CD4-positive, alpha-beta T cell (primary cell): ENCODE measurements at regions of chr2 and their contacts with region 1.

Region 1: DNA sequence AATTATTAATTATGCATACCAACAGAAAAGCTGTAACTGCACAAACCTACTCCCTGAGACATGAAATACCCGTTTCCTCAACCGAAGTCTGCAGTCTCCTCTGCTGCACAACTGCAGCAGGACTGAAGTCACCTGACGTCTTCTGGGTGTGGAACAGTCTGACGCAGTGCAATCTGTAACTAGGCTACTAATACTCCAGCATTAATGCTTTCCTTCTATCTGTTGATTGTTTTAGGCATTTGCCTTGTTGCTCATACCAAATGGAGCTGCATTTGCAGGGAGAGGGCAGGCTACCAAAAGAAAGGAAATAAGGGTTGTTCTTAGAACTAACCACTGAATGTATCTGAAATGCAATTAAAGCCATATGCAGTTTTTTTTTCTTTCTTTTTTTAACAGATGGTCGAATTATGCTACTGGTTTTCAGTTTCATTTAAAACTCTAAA is 40.1 kb downstream of the RTN4 start:
- DNase-seq: peak; percentile 22 to 81 (median 38)
- ATAC-seq: peak; percentile 94
- H3K4me3 ChIP-seq: peak overlapping the region; percentile 54
- H3K4me3 Mint-ChIP-seq: peak overlapping the region; percentile 92
- H3K27ac ChIP-seq: peak overlapping the region; percentile 25 to 36
- H3K27ac Mint-ChIP-seq: peak overlapping the region; percentile 87
- H3K4me1 ChIP-seq: peaks cover 9% of the 10 kb centered on the region
- H3K4me1 Mint-ChIP-seq: peaks cover 76% of the 10 kb centered on the region
- H3K27me3 ChIP-seq: no peaks in the 10 kb centered on the region
- H3K27me3 Mint-ChIP-seq: no peaks in the 10 kb centered on the region
- CTCF ChIP-seq: no peak

Region 2: DNA sequence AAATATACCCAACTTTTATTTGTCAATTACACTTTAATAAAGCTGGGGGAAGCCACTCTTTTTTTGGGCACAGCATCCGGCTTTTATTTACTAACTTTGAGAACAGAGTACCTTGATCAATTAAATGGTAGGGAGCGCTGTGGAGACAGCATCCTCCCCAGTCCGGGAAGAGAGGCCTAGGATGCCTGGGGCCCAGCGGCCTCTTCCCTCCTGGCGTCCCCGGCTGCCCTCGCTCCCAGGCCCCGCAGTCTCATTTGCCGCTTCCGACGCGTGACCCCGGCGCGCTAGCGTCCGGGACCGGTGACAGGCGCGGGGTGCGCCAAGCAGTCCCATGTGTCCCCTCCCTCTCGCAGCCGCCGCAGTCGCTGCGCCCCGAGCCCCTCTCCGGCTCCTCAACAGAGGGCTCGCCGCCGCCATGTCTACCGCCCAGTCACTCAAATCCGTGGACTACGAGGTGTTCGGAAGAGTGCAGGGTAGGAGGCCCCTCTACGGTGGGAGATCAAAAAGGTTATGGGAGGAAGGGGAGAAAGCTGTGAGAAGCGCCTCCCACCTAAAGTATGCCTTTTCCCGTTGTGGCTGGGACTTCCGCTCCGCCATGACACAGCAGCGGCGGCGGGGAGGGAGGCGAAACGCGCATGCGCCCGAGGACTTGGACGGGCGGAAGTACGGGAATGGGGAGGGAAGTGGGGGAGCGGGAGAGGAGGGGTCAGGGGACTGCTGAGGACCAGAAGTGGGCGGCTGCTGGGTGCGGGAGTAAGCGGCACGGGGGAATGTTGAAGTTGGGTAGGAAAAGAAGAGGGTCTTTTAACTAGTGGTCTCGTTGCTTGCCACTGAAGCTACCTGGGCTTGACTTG is 894.7 kb before region 1 on chr2 and contains the start of gene ACYP2:
- CTCF ChIA-PET with region 1: no interaction called
- POLR2A ChIA-PET with region 1: no interaction called
- intact Hi-C with region 1: loop called in 1 of 2 experiments (anchors 10 kb)
- DNase-seq: peak; percentile 79 to 96 (median 90)
- ATAC-seq: peak; percentile 78
- H3K4me3 ChIP-seq: peak within 1 kb of the TSS; percentile 86
- H3K4me3 Mint-ChIP-seq: peak within 1 kb of the TSS; percentile 92
- H3K27ac ChIP-seq: peak within 1 kb of the TSS; percentile 96 to 98
- H3K27ac Mint-ChIP-seq: peak within 1 kb of the TSS; percentile 99
- H3K4me1 ChIP-seq: peaks cover 11% of the 10 kb centered on the region
- H3K4me1 Mint-ChIP-seq: peaks cover 16% of the 10 kb centered on the region
- H3K27me3 ChIP-seq: no peaks in the 10 kb centered on the region
- H3K27me3 Mint-ChIP-seq: no peaks in the 10 kb centered on the region
- CTCF ChIP-seq: peak; percentile 17
- total RNA-seq, gene ACYP2: 9.3 to 10.9 TPM

Region 3: DNA sequence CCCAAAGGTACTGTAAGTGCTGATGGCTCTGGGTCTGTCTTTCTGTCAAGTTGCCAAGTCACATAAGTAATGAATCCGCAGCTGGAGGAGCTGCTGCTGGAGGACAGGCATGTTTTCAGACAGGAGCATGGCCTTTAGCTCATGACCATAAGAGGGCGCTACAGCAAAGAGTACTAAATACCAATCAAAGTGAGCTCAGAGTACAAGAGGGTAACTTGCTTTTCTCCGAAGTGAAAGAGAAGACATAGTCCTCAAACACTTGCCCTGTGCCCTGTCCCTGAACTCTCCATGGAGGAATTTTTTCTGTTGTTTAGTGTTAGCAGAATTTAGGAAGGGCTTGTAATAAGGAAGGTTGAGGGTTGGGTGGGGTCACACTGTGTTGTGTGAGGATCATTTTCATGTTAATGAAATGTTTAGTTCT is 344.7 kb before region 1 on chr2:
- CTCF ChIA-PET with region 1: no interaction called
- POLR2A ChIA-PET with region 1: no interaction called
- intact Hi-C with region 1: loop called in 1 of 2 experiments (anchors 10 kb)
- DNase-seq: peak in 9 of 14 experiments; percentile 10 to 71 (median 32)
- ATAC-seq: peak; percentile 77
- H3K4me3 ChIP-seq: no peak overlapping the region
- H3K4me3 Mint-ChIP-seq: no peak overlapping the region
- H3K27ac ChIP-seq: no peak overlapping the region
- H3K27ac Mint-ChIP-seq: peak overlapping the region; percentile 18
- H3K4me1 ChIP-seq: no peaks in the 10 kb centered on the region
- H3K4me1 Mint-ChIP-seq: peaks cover 5% of the 10 kb centered on the region
- H3K27me3 ChIP-seq: no peaks in the 10 kb centered on the region
- H3K27me3 Mint-ChIP-seq: no peaks in the 10 kb centered on the region
- CTCF ChIP-seq: peak; percentile 55

Region 4: DNA sequence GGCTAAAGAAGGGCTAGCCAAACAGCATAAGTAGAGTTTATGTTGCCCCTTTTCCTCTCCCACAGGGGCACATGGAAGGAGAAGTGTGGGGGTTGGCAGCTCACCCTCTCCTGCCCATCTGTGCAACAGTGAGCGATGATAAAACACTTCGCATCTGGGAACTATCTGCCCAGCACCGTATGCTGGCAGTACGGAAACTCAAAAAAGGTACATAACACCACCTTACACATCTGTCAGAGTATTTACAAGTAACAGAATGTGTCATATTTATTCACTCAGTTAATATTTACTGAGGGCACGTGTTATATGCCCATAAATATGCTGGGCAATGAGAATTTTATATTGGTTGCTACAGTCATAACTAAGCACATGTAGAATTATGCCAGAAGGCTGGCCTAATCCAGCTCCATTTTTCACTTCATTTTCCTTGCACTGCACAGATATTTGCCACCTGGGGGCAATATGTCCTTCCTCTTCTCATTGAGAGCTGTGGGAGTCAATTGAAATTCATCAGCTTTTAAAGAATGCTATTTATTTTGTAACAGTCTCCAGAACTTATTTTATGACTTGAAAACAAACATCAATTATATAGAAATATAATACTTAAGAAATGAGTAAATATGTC is 110.5 kb before region 1 on chr2:
- CTCF ChIA-PET with region 1: interaction called, 3 read pairs
- POLR2A ChIA-PET with region 1: interaction called, 3 read pairs
- intact Hi-C with region 1: loop called in 1 of 2 experiments (anchors 5 kb)
- DNase-seq: peak in 3 of 14 experiments; percentile 41 to 47 (median 45)
- ATAC-seq: no peak
- H3K4me3 ChIP-seq: no peak overlapping the region
- H3K4me3 Mint-ChIP-seq: no peak overlapping the region
- H3K27ac ChIP-seq: no peak overlapping the region
- H3K27ac Mint-ChIP-seq: no peak overlapping the region
- H3K4me1 ChIP-seq: peaks cover 21% of the 10 kb centered on the region
- H3K4me1 Mint-ChIP-seq: peaks cover 27% of the 10 kb centered on the region
- H3K27me3 ChIP-seq: no peaks in the 10 kb centered on the region
- H3K27me3 Mint-ChIP-seq: no peaks in the 10 kb centered on the region
- CTCF ChIP-seq: peak; percentile 41

Region 5: GRCh38 chr2:54904836-54905235 is 105.3 kb before region 1 on chr2:
- CTCF ChIA-PET with region 1: interaction called, 3 read pairs
- POLR2A ChIA-PET with region 1: interaction called, 3 read pairs
- intact Hi-C with region 1: loop called (anchors 5 kb)
- DNase-seq: no peak
- ATAC-seq: no peak
- H3K4me3 ChIP-seq: no peak overlapping the region
- H3K4me3 Mint-ChIP-seq: no peak overlapping the region
- H3K27ac ChIP-seq: no peak overlapping the region
- H3K27ac Mint-ChIP-seq: no peak overlapping the region
- H3K4me1 ChIP-seq: peaks cover 8% of the 10 kb centered on the region
- H3K4me1 Mint-ChIP-seq: peaks cover 4% of the 10 kb centered on the region
- H3K27me3 ChIP-seq: no peaks in the 10 kb centered on the region
- H3K27me3 Mint-ChIP-seq: no peaks in the 10 kb centered on the region
- CTCF ChIP-seq: no peak

Region 6: DNA sequence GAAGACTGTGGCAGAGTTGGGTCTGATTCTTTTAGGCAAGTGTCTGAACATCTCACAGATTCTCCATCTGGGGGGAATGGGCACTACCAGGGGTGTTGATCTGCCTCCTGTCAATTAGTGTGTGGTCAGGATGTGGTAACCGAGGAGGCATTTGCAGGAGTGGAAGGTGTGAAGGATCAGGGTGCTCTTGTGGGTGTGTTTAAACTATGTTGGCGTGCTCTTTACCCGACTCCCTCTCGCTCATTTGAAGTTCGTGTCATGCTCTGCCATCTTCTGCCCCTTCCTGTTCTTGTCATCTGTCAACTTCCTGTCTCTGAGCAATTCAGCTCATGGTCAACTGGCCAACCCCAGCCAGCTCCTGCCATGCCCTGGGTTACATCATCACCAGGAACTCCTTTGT is 67.8 kb before region 1 on chr2:
- CTCF ChIA-PET with region 1: no interaction called
- POLR2A ChIA-PET with region 1: no interaction called
- intact Hi-C with region 1: no loop called
- DNase-seq: peak in 4 of 14 experiments; percentile 22 to 79 (median 52)
- ATAC-seq: peak; percentile 81
- H3K4me3 ChIP-seq: no peak overlapping the region
- H3K4me3 Mint-ChIP-seq: no peak overlapping the region
- H3K27ac ChIP-seq: no peak overlapping the region
- H3K27ac Mint-ChIP-seq: no peak overlapping the region
- H3K4me1 ChIP-seq: peaks cover 20% of the 10 kb centered on the region
- H3K4me1 Mint-ChIP-seq: no peaks in the 10 kb centered on the region
- H3K27me3 ChIP-seq: no peaks in the 10 kb centered on the region
- H3K27me3 Mint-ChIP-seq: peaks cover 4% of the 10 kb centered on the region
- CTCF ChIP-seq: no peak

Region 7: GRCh38 chr2:54977149-54977548 is 33.0 kb before region 1 on chr2:
- CTCF ChIA-PET with region 1: no interaction called
- POLR2A ChIA-PET with region 1: no interaction called
- intact Hi-C with region 1: loop called in 1 of 2 experiments (anchors 5 kb)
- DNase-seq: no peak
- ATAC-seq: no peak
- H3K4me3 ChIP-seq: no peak overlapping the region
- H3K4me3 Mint-ChIP-seq: no peak overlapping the region
- H3K27ac ChIP-seq: no peak overlapping the region
- H3K27ac Mint-ChIP-seq: no peak overlapping the region
- H3K4me1 ChIP-seq: peaks cover 3% of the 10 kb centered on the region
- H3K4me1 Mint-ChIP-seq: peaks cover 49% of the 10 kb centered on the region
- H3K27me3 ChIP-seq: no peaks in the 10 kb centered on the region
- H3K27me3 Mint-ChIP-seq: no peaks in the 10 kb centered on the region
- CTCF ChIP-seq: no peak

Region 8: DNA sequence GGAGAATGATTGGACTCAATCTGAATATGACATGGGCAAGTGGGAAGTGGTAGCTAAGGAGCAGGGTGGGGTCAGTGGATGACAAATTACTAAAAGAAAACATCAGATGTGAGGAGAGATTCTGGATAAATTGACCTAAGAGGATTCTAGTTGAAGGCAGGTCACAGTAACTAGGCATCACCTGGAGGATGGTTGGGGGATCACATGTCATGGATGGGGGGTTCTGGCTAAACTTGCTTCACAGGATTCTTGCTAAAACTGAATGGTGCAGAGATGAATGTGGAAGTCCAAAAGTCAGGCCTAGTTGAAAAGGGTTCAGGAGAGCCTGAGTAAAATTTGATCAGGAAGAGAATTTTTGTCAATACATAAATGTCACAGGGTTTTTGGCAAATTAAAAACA is 203.7 kb after region 1 on chr2:
- CTCF ChIA-PET with region 1: no interaction called
- POLR2A ChIA-PET with region 1: no interaction called
- intact Hi-C with region 1: no loop called
- DNase-seq: no peak
- ATAC-seq: no peak
- H3K4me3 ChIP-seq: no peak overlapping the region
- H3K4me3 Mint-ChIP-seq: no peak overlapping the region
- H3K27ac ChIP-seq: no peak overlapping the region
- H3K27ac Mint-ChIP-seq: no peak overlapping the region
- H3K4me1 ChIP-seq: no peaks in the 10 kb centered on the region
- H3K4me1 Mint-ChIP-seq: no peaks in the 10 kb centered on the region
- H3K27me3 ChIP-seq: no peaks in the 10 kb centered on the region
- H3K27me3 Mint-ChIP-seq: no peaks in the 10 kb centered on the region
- CTCF ChIP-seq: no peak